ENCODE measurements at regions of chr5 and their contacts with region 1.

Region 1: GRCh38 chr5:172361566-172362238 is 78.1 kb upstream of the UBTD2 start:
- DNase-seq: peak; percentile 81
- H3K4me3 Mint-ChIP-seq: no peak overlapping the region
- H3K27ac Mint-ChIP-seq: peak overlapping the region; percentile 78
- H3K4me1 Mint-ChIP-seq: peaks cover 11% of the 10 kb centered on the region
- H3K27me3 Mint-ChIP-seq: no peaks in the 10 kb centered on the region

Region 2: GRCh38 chr5:172065501-172065990 is 296.2 kb before region 1 on chr5:
- CTCF ChIA-PET with region 1: no interaction called
- POLR2A ChIA-PET with region 1: no interaction called
- intact Hi-C with region 1: no loop called
- DNase-seq: no peak
- H3K4me3 Mint-ChIP-seq: no peak overlapping the region
- H3K27ac Mint-ChIP-seq: no peak overlapping the region
- H3K4me1 Mint-ChIP-seq: peaks cover 50% of the 10 kb centered on the region
- H3K27me3 Mint-ChIP-seq: no peaks in the 10 kb centered on the region

Region 3: GRCh38 chr5:172377856-172378255 is 16.2 kb after region 1 on chr5:
- CTCF ChIA-PET with region 1: no interaction called
- POLR2A ChIA-PET with region 1: no interaction called
- intact Hi-C with region 1: no loop called
- DNase-seq: no peak
- H3K4me3 Mint-ChIP-seq: no peak overlapping the region
- H3K27ac Mint-ChIP-seq: no peak overlapping the region
- H3K4me1 Mint-ChIP-seq: no peaks in the 10 kb centered on the region
- H3K27me3 Mint-ChIP-seq: peaks cover 4% of the 10 kb centered on the region

Region 4: DNA sequence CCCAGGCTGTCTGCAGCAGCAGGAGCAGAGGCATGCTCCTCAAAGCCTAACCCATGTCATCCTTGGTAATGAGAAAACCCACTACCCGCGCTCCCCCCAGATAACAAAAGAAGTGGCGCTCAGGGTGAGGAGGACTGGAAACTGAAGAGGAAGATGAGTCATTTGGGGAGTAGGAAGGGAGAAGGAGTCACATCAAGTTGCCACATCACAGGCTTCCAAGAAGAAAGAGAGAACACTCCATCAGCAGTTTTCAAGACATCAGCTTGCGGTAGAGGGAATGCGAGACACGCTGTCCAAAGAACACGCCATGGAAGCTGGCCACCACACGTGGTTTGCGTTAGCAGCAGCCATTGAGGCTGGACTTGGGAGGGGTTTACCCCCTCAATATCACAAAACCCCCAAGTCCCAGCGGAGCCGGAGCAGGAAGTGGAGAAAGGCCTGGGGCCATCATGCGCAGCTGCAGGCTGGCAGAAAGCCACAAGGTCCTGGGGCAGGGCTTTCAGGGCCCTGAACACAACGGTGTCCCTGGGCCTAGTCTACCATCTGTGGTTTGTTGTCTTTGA is 51.1 kb after region 1 on chr5:
- CTCF ChIA-PET with region 1: no interaction called
- POLR2A ChIA-PET with region 1: no interaction called
- intact Hi-C with region 1: loop called (anchors 1 kb)
- DNase-seq: peak; percentile 51
- H3K4me3 Mint-ChIP-seq: no peak overlapping the region
- H3K27ac Mint-ChIP-seq: peak overlapping the region; percentile 2
- H3K4me1 Mint-ChIP-seq: peaks cover 22% of the 10 kb centered on the region
- H3K27me3 Mint-ChIP-seq: peaks cover 9% of the 10 kb centered on the region